ENCODE measurements at regions of chr5 and their contacts with region 1.

Region 1: DNA sequence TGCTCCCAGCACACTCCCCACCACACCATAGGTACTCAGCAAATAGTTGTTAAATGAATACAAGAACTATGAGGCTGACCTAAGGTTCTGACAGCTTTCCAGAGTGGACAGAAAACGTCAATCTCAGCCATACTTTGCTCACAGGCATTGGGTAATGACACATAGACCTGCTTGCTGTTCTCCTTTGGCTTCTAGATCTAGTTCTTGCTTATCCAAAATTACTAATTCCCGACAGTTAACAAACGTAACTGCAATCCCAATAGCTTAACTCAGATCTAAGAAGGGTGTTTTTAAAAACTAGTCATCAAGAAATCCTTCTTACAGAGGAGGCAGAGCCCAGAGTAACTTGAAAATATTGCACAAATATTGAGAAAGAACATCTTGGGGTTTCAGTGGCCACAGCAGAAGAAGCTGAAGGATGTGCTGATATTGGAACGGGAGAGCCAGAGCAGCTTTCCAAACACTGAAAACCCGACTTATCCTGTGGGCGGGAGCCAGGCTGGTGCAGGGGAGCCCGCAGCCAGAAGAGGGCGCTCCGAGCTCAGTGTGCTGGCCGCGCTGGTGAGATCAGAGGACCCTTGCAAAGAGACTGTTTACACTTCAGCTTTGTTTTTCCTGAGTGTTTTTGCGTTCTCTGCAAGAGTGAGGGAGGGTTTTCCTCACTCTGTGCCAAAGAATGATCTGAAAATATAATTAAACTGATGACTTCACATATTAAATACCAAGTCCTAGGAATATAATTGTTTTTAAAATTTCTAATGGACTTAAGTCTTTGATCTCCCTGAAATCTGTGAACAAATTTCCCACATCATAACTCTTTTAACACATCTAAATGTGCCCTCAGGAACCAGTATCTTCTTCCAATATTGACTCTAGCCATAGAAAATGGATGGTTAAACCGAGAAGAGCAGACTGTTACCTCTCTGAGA is 30.3 kb downstream of the FGF1 start:
- DNase-seq: peak; percentile 62
- ATAC-seq: peak; percentile 97
- H3K4me3 ChIP-seq: no peak overlapping the region
- H3K27ac ChIP-seq: no peak overlapping the region
- H3K4me1 ChIP-seq: no peaks in the 10 kb centered on the region
- H3K27me3 ChIP-seq: peaks cover 1 to 9% of the 10 kb centered on the region in 2 experiments; a peak in 3 of 5 replicates
- CTCF ChIP-seq: peak; percentile 97
- EP300 ChIP-seq: no peak
- POLR2A ChIP-seq: no peak
- RAD21 ChIP-seq: peak; percentile 93

Region 2: GRCh38 chr5:142520886-142521285 is 134.7 kb before region 1 on chr5:
- CTCF ChIA-PET with region 1: no interaction called
- POLR2A ChIA-PET with region 1: no interaction called
- in situ Hi-C with region 1: no loop called
- intact Hi-C with region 1: no loop called
- DNase-seq: no peak
- ATAC-seq: no peak
- H3K4me3 ChIP-seq: no peak overlapping the region
- H3K27ac ChIP-seq: peak overlapping the region; percentile 59
- H3K4me1 ChIP-seq: peaks cover 59% of the 10 kb centered on the region
- H3K27me3 ChIP-seq: no peaks in the 10 kb centered on the region
- CTCF ChIP-seq: no peak
- EP300 ChIP-seq: no peak
- POLR2A ChIP-seq: no peak
- RAD21 ChIP-seq: no peak

Region 3: GRCh38 chr5:142611154-142611553 is 44.4 kb before region 1 on chr5:
- CTCF ChIA-PET with region 1: interaction called, 4 read pairs
- POLR2A ChIA-PET with region 1: no interaction called
- in situ Hi-C with region 1: no loop called
- intact Hi-C with region 1: loop called (anchors 2 kb)
- DNase-seq: peak; percentile 48
- ATAC-seq: peak; percentile 97
- H3K4me3 ChIP-seq: no peak overlapping the region
- H3K27ac ChIP-seq: no peak overlapping the region
- H3K4me1 ChIP-seq: no peaks in the 10 kb centered on the region
- H3K27me3 ChIP-seq: peaks cover 0 to 19% of the 10 kb centered on the region in 2 experiments; a peak in 2 of 5 replicates
- CTCF ChIP-seq: peak; percentile 86
- EP300 ChIP-seq: no peak
- POLR2A ChIP-seq: no peak
- RAD21 ChIP-seq: peak; percentile 69

Region 4: DNA sequence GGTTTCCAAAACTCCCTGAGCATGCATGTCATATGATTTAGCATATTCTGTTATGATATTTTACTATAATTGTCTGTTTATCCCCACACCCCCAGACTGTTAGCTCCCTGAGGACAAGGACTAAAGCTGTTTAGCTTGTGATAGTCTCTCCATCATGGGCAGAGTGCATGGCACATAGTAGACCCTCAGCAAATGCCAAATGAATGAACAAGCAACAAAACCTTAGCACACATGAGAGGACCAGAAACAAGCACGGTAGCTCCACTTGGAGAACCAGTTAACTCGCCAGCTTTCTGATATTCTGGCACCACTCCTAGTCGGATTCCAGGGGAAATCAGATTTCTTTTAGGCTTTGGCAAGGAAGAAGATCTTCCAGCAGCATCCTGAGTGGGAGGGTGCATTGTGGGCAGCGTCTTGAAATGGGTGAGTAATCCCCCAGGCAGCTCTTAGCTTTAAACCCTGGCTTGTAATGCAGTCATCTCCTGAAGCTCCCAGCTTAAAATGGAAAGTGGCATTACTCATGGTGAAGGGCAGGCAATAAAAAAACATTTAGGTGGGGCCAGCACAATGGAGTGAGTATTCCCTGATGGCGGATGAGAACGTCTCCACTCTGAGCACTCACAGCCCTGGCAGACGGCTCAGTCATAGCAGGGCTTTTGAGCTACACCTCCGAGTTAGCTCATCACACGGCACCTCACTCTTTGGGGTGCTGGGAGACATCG is 10.8 kb before region 1 on chr5:
- CTCF ChIA-PET with region 1: no interaction called
- POLR2A ChIA-PET with region 1: no interaction called
- in situ Hi-C with region 1: no loop called
- intact Hi-C with region 1: no loop called
- DNase-seq: no peak
- ATAC-seq: no peak
- H3K4me3 ChIP-seq: no peak overlapping the region
- H3K27ac ChIP-seq: no peak overlapping the region
- H3K4me1 ChIP-seq: no peaks in the 10 kb centered on the region
- H3K27me3 ChIP-seq: peaks cover 0 to 6% of the 10 kb centered on the region in 2 experiments; a peak in 3 of 5 replicates
- CTCF ChIP-seq: no peak
- EP300 ChIP-seq: no peak
- POLR2A ChIP-seq: no peak
- RAD21 ChIP-seq: no peak

Region 5: GRCh38 chr5:142699184-142699720 is 43.6 kb after region 1 on chr5:
- CTCF ChIA-PET with region 1: interaction called, 76 read pairs
- POLR2A ChIA-PET with region 1: interaction called, 5 read pairs
- in situ Hi-C with region 1: loop called (anchors 5 kb)
- intact Hi-C with region 1: loop called (anchors 1 kb)
- DNase-seq: peak; percentile 79
- ATAC-seq: peak; percentile 99
- H3K4me3 ChIP-seq: no peak overlapping the region
- H3K27ac ChIP-seq: no peak overlapping the region
- H3K4me1 ChIP-seq: no peaks in the 10 kb centered on the region; the same call in 1 of the 2 replicates
- H3K27me3 ChIP-seq: peaks cover 0 to 6% of the 10 kb centered on the region in 2 experiments; a peak in 1 of 5 replicates
- CTCF ChIP-seq: peak; percentile 95
- EP300 ChIP-seq: no peak
- POLR2A ChIP-seq: no peak
- RAD21 ChIP-seq: peak; percentile 95

Region 6: DNA sequence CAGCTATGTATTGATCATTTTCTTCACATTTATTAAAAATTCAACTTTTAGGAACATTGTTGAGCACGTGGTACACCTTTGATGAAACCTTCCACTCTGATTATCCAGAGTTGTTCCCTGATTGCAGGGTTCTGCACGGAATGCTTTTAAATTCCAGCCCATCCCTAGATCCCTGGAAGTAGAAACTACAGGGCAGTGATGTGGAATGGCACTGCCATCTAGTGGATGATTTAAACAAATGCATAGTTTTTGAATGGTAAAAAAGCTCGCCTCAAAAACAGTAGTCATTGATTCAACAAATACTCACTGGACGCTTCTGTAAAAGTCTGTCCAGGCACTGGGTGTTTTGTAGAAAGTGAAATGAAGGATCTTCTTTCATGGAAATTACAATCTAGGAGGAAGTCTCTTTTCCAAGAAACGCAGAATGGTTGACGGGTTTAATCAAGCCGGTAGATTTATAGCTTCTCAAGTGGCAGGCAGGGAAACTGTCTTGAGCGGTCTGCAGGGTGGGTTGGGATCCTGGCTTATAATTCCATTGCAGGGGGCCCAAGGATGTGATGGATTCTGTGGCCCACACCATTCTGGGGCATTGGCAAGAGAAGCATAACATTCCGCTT is 233.0 kb after region 1 on chr5:
- CTCF ChIA-PET with region 1: interaction called, 12 read pairs
- POLR2A ChIA-PET with region 1: no interaction called
- in situ Hi-C with region 1: no loop called
- intact Hi-C with region 1: loop called (anchors 5 kb)
- DNase-seq: peak; percentile 61
- ATAC-seq: peak; percentile 80
- H3K4me3 ChIP-seq: no peak overlapping the region
- H3K27ac ChIP-seq: no peak overlapping the region
- H3K4me1 ChIP-seq: 0 out of 2 replicates have a peak, but pooled peaks cover 7% of the 10 kb centered on the region
- H3K27me3 ChIP-seq: no peaks in the 10 kb centered on the region
- CTCF ChIP-seq: peak; percentile 78
- EP300 ChIP-seq: no peak
- POLR2A ChIP-seq: no peak
- RAD21 ChIP-seq: peak; percentile 54; the same call in 1 of the 2 replicates

Measured in HepG2 (cell line).